ENCODE measurements at regions of chr3 and their contacts with region 1.

Region 1: DNA sequence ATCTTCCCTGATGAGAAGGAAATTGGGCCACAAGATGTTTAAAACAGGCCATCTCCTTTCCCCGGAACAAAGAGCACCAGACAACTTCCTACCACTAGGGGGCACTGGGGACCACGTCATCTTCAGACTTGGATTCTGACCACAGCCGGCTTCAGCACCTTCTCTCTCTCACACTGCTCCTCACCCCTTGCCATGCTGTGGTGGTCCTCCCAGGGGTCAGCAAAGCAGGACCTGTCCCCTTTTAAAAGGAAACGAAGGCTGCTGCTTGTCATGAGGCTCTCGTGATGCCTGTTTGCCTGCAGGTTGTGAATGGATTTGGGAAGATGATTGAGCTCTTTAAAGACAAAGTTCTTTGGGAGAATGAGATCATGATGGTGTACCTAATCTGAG is 16.2 kb downstream of the RFT1 start:
- DNase-seq: no peak
- H3K4me3 ChIP-seq: no peak overlapping the region
- H3K27ac ChIP-seq: no peak overlapping the region
- H3K27me3 ChIP-seq: no peaks in the 10 kb centered on the region
- CTCF ChIP-seq: peak; percentile 97

Region 2: GRCh38 chr3:52663098-52663497 is 450.9 kb before region 1 on chr3:
- CTCF ChIA-PET with region 1: no interaction called
- POLR2A ChIA-PET with region 1: no interaction called
- DNase-seq: no peak
- H3K4me3 ChIP-seq: no peak overlapping the region
- H3K27ac ChIP-seq: no peak overlapping the region
- H3K27me3 ChIP-seq: no peaks in the 10 kb centered on the region
- CTCF ChIP-seq: no peak

Region 3: GRCh38 chr3:53103397-53104296 is 10.4 kb before region 1 on chr3:
- CTCF ChIA-PET with region 1: interaction called, 10 read pairs
- POLR2A ChIA-PET with region 1: no interaction called
- DNase-seq: no peak
- H3K4me3 ChIP-seq: no peak overlapping the region
- H3K27ac ChIP-seq: no peak overlapping the region
- H3K27me3 ChIP-seq: no peaks in the 10 kb centered on the region
- CTCF ChIP-seq: no peak

Region 4: DNA sequence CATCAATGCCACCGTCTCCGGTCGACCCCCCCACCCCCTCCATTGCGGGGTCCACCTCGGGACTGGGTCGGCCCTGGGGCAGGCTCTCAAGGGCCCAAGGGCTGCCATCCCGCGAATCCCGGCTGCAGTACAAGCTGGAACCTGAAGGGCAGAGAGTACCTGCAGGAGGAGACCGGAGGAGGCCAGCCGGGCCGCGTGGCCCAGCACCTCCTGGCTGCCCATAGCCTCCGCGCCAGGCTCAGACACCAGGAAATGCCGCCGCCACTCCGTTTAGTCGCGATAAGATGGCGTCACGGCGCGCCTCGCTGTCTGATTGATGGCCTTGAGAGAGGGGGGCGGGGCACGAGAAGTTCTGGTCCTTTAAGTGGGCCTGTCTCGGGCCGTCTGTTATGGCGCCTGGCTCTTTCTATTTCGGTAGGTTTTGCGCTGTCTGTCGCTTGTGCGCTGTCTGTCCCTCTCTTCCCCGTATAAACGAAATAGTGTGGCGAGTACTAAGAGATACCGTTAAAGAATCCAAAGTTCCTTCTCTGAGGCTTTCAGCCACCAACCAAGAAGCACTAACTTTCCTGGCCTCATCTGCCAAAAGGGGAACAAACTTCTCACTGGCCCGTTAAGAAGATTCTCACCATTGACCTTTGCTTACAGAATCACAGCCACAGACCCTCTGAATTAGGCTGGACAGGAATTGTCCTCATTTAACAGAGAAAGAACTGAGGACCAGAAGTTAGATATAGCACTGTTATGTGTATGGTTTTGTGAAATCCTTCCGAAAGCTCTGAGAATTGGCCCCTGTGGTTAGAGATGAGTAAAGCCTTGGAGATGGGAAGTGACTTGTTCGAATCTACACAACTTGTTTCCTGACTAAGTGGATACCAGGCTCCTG is 16.4 kb after region 1 on chr3 and contains the start of gene RFT1:
- CTCF ChIA-PET with region 1: interaction called, 28 read pairs
- POLR2A ChIA-PET with region 1: no interaction called
- DNase-seq: peak; percentile 84
- H3K4me3 ChIP-seq: peak within 1 kb of the TSS; percentile 96
- H3K27ac ChIP-seq: peak within 1 kb of the TSS; percentile 82
- H3K27me3 ChIP-seq: no peaks in the 10 kb centered on the region
- CTCF ChIP-seq: peak; percentile 15
- polyA plus RNA-seq, gene RFT1: 24.7 and 26.4 TPM in 2 replicates

Region 5: DNA sequence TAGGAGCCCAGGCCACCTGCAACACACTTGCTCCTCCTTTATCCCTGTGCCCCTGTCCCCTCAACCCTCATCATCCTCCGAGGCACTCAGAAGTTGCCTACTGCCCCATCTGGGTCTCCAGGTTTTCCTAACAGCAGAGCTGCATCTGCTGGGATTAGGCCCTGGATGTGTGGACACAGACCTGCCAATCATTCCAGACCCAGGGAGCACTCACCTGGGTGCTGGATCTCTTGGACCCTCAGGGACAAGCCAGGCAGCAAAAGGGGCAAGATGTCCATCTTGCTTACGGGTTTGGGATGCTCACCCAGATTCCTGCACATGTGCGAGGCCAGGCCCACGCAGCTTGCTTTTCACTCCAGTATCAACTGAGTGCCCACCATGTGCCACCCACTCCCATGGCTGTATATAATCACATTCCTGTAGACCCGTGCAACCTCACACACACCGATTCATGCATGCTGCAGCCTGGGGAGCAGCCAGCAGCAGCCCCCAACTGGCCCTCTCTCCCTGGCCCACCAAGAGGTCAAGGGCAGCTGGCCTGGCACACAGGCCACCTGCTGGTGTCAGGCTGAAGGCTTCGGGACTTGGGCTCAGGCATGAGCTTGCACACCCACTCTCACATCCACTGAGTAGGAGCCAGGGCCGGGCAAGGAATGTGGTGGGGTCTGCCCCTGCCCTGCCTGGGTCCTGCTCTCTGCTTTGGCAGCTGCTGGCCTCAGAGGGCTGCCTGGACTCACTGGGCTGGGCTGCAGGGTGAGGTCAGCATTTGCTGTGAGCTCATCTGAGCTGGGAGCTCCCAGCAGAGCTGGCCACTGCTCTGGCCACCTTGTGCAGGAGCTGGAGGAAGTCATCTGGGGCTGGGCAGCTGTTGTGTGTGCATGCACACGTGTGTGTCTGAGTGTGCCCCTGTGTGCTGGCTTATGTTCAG is 61.9 kb after region 1 on chr3:
- CTCF ChIA-PET with region 1: interaction called, 10 read pairs
- POLR2A ChIA-PET with region 1: no interaction called
- DNase-seq: no peak
- H3K4me3 ChIP-seq: no peak overlapping the region
- H3K27ac ChIP-seq: no peak overlapping the region
- H3K27me3 ChIP-seq: no peaks in the 10 kb centered on the region
- CTCF ChIP-seq: no peak

Region 6: DNA sequence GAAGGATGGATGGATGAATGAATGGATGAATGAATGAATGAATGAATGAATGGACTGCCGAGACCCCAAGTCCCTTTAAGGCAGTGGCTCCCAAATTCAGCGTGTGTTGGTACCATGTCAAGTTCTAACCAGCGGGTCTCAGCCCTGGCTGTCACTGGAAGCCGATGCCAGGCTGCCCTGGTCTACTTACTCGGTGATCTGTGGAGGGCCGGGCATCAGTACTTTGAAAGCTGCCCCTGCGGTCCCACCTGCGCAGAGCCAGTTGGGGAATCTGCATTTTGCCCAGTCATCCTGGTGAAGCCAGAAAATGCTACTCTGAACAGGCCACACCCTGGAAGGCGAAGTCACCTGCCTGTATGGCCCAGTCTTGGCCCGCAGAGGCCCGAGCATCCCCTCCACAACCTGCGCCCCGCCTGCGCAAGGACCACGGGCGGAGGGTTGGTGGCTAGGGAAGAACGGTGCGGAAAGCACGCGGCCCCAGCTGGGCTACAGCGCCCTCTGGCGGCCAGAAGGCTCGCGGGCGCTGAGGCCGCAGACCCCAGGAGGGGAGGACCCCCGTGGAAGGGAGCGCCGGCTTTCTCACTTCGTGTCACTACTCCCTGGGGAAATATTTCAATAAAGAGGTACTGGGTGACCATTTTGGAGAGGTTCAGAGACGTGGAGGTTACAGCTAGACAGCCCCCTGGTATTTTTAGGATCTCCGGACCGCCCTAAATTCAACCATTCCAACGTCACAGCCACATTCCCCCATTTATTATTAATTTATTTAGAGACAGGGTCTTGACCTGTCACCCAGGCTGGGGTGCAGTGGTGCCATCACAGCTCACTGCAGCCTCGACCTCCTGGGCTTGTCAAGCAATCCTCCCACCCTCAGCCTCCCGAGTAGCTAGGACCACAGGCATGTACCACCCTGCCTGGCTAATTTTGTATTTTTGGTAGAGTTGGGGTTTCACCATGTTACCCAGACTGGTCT is 81.9 kb after region 1 on chr3:
- CTCF ChIA-PET with region 1: interaction called, 97 read pairs
- POLR2A ChIA-PET with region 1: interaction called, 3 read pairs
- DNase-seq: no peak
- H3K4me3 ChIP-seq: no peak overlapping the region
- H3K27ac ChIP-seq: no peak overlapping the region
- H3K27me3 ChIP-seq: no peaks in the 10 kb centered on the region
- CTCF ChIP-seq: peak; percentile 98

Region 7: DNA sequence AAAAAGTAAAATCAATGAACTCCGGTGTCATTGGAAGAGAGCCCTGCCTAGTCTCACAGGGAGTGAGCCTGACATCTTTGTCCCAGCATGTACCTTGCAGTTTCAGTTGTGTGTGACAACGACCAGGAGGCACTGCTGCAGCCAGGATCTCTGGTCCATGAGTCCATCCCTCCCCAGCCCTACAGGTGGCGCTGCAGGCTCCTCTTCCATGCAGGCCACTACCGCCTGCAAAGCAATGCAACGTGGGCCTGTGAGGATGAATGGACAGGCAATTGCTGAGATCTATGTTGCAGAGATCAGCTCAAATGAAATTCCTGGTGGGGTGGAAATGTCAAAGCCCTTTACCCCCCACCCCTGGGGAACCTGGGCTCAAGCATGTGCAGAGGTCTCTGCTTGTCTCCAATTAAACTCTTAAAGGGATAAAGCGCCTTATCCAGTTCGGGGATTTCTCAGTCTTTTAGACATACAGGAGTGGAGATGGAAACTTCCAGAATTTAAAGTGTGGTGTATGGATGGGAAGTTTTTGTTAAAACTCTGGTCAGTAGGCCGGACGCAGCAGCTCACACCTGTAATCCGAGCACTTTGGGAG is 106.0 kb after region 1 on chr3:
- CTCF ChIA-PET with region 1: interaction called, 10 read pairs
- POLR2A ChIA-PET with region 1: no interaction called
- DNase-seq: peak; percentile 41
- H3K4me3 ChIP-seq: no peak overlapping the region
- H3K27ac ChIP-seq: no peak overlapping the region
- H3K27me3 ChIP-seq: no peaks in the 10 kb centered on the region
- CTCF ChIP-seq: peak; percentile 97

Region 8: DNA sequence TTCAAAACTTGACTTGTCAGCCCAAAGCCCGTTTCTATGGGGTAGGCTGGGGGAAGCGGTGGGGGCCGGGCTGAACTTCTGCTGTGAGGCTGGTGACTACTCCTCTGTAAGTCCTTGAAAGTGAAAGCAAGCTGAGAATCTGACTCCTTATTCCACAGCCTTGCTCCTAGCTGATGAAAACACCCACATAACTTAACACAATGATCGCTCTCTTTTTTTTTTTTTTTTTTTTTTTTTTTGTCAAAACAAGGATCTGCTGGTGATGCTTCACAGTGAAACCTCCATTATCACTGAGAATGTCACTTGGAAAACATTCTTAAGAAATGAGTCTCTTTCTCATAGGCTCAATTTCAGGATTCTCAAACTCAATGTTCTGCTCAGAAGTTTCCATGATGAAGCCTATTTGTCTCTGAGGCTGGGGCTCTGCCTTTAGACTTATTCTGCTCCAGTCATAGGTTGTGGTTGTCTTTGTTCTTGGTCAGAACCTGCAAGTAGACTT is 173.2 kb after region 1 on chr3:
- CTCF ChIA-PET with region 1: interaction called, 12 read pairs
- POLR2A ChIA-PET with region 1: no interaction called
- DNase-seq: peak; percentile 15
- H3K4me3 ChIP-seq: no peak overlapping the region
- H3K27ac ChIP-seq: no peak overlapping the region
- H3K27me3 ChIP-seq: no peaks in the 10 kb centered on the region
- CTCF ChIP-seq: no peak